Breast epithelium (tissue), 4 donors: ENCODE measurements at regions of chr6 and their contacts with region 1.

Region 1: DNA sequence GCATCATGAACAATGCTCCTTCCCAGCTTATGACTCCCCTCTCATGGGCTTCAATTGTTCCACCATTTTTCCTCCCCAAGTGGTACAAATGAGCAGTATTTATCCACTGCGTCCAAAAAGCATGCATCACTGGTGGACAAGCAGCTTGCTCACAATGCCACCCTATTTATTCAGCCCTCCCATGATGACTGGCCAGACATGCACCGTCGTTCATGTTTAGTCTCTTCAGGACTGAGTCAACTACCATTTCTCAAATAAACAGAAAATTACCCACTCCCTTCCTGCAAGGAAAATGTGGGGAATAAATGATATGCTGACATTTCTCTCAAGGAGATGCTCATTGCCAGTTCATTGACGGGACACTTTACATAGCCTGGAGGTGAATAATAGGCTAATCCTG is 300.4 kb downstream of the C6orf118 start:
- DNase-seq: no peak
- H3K4me3 ChIP-seq: no peak overlapping the region
- H3K27ac ChIP-seq: no peak overlapping the region
- H3K4me1 ChIP-seq: no peaks in the 10 kb centered on the region
- H3K27me3 ChIP-seq: no peaks in the 10 kb centered on the region
- CTCF ChIP-seq: no peak
- POLR2A ChIP-seq: no peak

Region 2: GRCh38 chr6:164554700-164555476 is 454.1 kb before region 1 on chr6:
- intact Hi-C with region 1: loop called (anchors 5 kb)
- DNase-seq: no peak
- H3K4me3 ChIP-seq: no peak overlapping the region
- H3K27ac ChIP-seq: no peak overlapping the region
- H3K4me1 ChIP-seq: no peaks in the 10 kb centered on the region
- H3K27me3 ChIP-seq: no peaks in the 10 kb centered on the region
- CTCF ChIP-seq: no peak
- POLR2A ChIP-seq: no peak